ENCODE measurements at regions of chr14 and their contacts with region 1.

Region 1: DNA sequence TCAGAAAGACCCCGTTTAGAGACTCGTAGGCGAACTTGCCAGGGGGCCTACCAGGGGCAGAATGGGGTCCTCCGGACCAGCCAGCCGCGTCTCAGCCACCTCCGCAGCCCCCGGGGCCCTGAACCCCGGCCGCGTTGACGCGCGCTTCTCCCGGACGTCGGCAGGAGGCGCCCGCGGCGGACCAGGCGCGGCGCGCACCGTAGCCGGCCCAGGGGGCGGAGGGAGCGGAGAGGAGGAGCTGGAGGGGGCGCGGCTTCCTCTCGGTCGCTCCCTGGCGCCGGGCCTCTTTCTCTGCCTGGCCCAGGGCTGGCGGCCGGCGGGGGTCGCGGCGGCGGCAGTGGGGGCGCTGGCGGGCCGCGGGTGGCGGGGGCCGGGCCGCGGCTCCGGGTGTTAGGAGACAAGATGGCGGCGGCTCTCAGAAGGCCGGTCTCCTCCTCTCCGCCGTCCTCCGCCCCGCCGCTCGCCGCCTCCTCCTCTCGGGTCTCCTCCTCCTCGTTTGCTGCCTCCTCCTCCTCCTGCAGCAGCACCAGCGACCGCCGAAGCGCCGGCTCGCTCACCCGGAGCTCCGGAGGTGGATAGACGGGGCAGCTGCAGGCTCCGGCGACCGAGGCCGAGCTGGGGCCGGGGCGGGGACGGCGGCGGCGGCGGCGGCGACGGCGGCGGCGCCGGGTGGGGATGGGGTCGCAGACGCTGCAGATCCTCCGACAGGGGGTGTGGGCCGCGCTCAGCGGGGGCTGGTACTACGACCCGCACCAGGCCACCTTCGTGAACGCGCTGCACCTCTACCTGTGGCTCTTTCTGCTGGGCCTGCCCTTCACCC is at the start of gene PCNX1:
- DNase-seq: peak; percentile 94
- ATAC-seq: peak; percentile 79
- H3K4me3 Mint-ChIP-seq: peak within 1 kb of the TSS; percentile 85
- H3K27ac Mint-ChIP-seq: peak within 1 kb of the TSS; percentile 93
- H3K4me1 Mint-ChIP-seq: peaks cover 26% of the 10 kb centered on the region
- H3K27me3 Mint-ChIP-seq: no peaks in the 10 kb centered on the region
- CTCF ChIP-seq: no peak
- total RNA-seq, gene PCNX1: 53.6 and 64.7 TPM in 2 replicates

Region 2: DNA sequence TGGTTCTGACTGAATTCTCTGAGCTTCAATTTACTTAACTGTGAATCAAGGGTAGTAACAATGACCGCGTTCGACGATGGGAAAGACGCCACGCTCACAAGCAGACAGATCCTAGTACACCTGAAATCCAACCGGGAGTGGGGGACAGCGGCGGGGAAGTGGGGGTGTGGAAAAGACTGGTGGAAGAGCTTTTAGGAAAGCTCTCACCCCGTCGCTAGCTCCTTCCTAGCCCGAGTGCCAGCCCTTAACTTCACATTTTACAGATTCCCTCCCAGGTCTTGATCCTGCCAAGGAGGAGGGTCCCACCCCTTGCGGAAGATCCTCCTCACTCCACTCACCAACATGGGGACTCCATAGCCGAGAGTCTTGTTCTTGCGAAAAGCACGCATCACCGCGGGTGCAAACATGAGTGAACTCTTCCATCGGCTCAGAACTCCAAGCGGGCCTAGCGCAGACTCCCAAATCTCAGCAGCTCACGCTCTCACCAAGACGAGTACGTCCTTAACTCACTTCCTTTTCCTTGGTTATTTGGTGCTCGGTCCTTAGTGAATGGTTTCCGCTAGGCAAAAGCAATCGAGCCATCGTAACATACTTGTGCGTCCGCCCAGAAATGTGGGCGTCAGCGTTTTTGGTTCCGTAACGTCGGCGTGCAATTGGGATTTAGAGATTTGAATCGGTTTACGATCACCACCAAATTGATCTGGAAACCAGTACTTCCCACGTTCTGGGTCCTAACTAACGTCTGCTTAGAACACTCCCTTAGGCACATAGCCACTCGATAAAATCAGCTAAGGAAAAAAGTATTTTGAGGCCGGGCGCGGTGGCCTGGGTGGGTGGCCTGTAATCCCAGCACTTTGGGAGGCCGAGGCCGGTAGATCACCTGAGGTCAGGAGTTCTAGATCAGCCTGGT is 548.0 kb before region 1 on chr14 and contains the start of gene COX16:
- CTCF ChIA-PET with region 1: no interaction called
- POLR2A ChIA-PET with region 1: no interaction called
- intact Hi-C with region 1: loop called (anchors 1 kb)
- DNase-seq: peak; percentile 72
- ATAC-seq: peak; percentile 93
- H3K4me3 Mint-ChIP-seq: peak within 1 kb of the TSS; percentile 99
- H3K27ac Mint-ChIP-seq: peak within 1 kb of the TSS; percentile 92
- H3K4me1 Mint-ChIP-seq: peaks cover 42% of the 10 kb centered on the region
- H3K27me3 Mint-ChIP-seq: peaks cover 2% of the 10 kb centered on the region
- CTCF ChIP-seq: no peak
- total RNA-seq, gene COX16: 48.8 and 50.7 TPM in 2 replicates

Region 3: GRCh38 chr14:70665191-70665916 is 242.0 kb before region 1 on chr14:
- CTCF ChIA-PET with region 1: no interaction called
- POLR2A ChIA-PET with region 1: no interaction called
- intact Hi-C with region 1: loop called (anchors 5 kb)
- DNase-seq: peak; percentile 40
- ATAC-seq: peak; percentile 62
- H3K4me3 Mint-ChIP-seq: peak overlapping the region; percentile 66
- H3K27ac Mint-ChIP-seq: peak overlapping the region; percentile 93
- H3K4me1 Mint-ChIP-seq: peaks cover 97% of the 10 kb centered on the region
- H3K27me3 Mint-ChIP-seq: no peaks in the 10 kb centered on the region
- CTCF ChIP-seq: no peak

Region 4: DNA sequence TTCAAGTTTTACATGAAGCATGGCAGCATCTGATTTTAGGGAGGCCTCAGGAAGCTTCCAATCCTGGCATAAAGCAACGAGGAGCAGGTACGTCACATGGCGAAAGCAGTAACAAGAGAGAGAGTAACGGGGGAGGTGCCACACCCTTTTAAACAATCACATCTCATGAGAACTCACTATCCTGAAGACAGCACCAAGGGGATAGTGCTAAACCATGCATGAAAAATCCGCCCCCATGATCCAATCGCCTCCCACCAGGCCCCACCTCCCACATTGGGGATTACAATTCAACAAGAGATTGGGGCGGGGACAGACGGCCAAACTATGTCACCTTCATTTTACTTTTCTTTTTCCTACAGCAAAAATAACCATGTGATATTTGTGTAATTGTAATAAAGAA is 90.9 kb before region 1 on chr14:
- CTCF ChIA-PET with region 1: interaction called, 17 read pairs
- POLR2A ChIA-PET with region 1: no interaction called
- intact Hi-C with region 1: loop called (anchors 2 kb)
- DNase-seq: no peak
- ATAC-seq: no peak
- H3K4me3 Mint-ChIP-seq: no peak overlapping the region
- H3K27ac Mint-ChIP-seq: no peak overlapping the region
- H3K4me1 Mint-ChIP-seq: peaks cover 26% of the 10 kb centered on the region
- H3K27me3 Mint-ChIP-seq: peaks cover 14% of the 10 kb centered on the region
- CTCF ChIP-seq: no peak

Region 5: GRCh38 chr14:70887207-70887681 is 20.1 kb before region 1 on chr14:
- CTCF ChIA-PET with region 1: interaction called, 11 read pairs
- POLR2A ChIA-PET with region 1: interaction called, 28 read pairs
- intact Hi-C with region 1: loop called (anchors 1 kb)
- DNase-seq: no peak
- ATAC-seq: peak; percentile 69
- H3K4me3 Mint-ChIP-seq: peak overlapping the region; percentile 73
- H3K27ac Mint-ChIP-seq: peak overlapping the region; percentile 80
- H3K4me1 Mint-ChIP-seq: peaks cover 50% of the 10 kb centered on the region
- H3K27me3 Mint-ChIP-seq: no peaks in the 10 kb centered on the region
- CTCF ChIP-seq: no peak

Region 6: DNA sequence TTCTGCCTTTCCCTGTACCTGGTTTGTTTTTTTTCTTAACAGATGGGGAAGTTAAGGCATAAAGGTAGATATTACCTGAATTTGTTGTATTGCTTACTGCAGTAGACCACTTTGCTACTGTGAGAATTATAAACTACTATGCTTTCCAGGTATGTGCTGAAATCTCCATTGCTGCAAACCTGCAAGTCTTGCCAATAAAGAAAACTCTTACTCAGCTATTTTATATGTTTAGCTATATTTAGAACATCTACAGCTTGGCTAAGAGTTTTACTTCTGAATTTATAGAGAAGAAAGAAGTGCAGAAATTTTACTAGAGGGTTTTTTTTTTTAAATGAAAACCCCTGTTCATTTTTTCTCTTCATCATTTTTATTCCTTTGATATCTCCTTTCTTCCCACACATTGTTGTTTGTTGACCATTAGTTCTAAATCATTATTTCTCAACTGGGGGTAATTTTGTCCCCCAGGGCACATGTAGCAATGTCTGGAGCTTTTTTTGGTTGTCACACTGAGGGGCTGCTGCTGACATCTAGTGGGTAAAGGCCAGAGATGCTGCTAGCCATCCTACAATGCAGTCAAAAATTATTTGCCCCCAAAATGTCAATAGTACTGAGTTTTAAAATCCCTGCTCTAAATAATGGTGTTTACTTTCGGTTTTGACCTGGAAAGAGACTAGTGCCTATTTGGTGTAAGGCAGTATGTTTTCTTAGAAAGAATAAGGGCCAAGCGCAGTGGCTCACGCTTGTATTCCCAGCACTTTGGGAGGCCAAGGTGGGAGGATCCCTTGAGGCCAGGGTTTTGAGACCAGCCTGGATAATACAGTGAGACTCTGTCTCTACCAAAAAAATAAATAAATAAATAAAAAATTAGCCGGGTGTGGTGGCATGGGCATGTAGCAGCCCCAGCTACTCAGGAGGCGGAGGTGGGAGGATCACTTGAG is 48.4 kb after region 1 on chr14:
- CTCF ChIA-PET with region 1: interaction called, 48 read pairs
- POLR2A ChIA-PET with region 1: no interaction called
- intact Hi-C with region 1: loop called (anchors 1 kb)
- DNase-seq: no peak
- ATAC-seq: peak; percentile 52
- H3K4me3 Mint-ChIP-seq: no peak overlapping the region
- H3K27ac Mint-ChIP-seq: no peak overlapping the region
- H3K4me1 Mint-ChIP-seq: peaks cover 3% of the 10 kb centered on the region
- H3K27me3 Mint-ChIP-seq: no peaks in the 10 kb centered on the region
- CTCF ChIP-seq: no peak

Region 7: DNA sequence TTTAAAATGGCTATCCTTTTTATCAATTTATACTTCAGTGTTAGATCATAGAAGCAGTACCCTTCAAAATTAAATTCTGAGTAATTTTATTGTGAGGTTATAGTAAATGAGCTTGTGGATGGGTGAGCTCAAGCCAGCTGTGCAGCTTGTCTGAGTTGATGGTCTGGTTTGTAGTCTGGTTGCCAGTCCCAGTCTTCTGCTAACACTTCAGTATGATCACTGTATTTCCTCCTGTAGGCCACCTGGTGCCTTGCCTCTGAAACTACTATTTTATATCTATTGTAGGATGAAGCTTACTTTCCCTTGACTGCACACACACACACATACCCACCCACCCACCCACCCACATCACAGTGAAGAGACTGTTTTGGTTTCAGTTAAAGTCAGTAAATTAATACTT is 496.3 kb after region 1 on chr14:
- CTCF ChIA-PET with region 1: no interaction called
- POLR2A ChIA-PET with region 1: no interaction called
- intact Hi-C with region 1: loop called (anchors 2 kb)
- DNase-seq: no peak
- ATAC-seq: peak; percentile 54
- H3K4me3 Mint-ChIP-seq: no peak overlapping the region
- H3K27ac Mint-ChIP-seq: peak overlapping the region; percentile 76
- H3K4me1 Mint-ChIP-seq: peaks cover 61% of the 10 kb centered on the region
- H3K27me3 Mint-ChIP-seq: no peaks in the 10 kb centered on the region
- CTCF ChIP-seq: no peak